Gastrocnemius medialis (tissue), 4 donors: ENCODE measurements at regions of chr9 and their contacts with region 1.

Region 1: GRCh38 chr9:2014696-2015580 is at the start of gene SMARCA2:
- DNase-seq: peak; percentile 96 to 97
- ATAC-seq: peak; percentile 77 to 81
- H3K4me3 ChIP-seq: peak within 1 kb of the TSS; percentile 79 to 96 (median 90)
- H3K27ac ChIP-seq: peak within 1 kb of the TSS; percentile 93 to 99 (median 96)
- H3K4me1 ChIP-seq: peaks cover 20% of the 10 kb centered on the region in 2 donors
- H3K27me3 ChIP-seq: no peaks in the 10 kb centered on the region
- CTCF ChIP-seq: no peak
- POLR2A ChIP-seq: peak; percentile 92 to 96
- total RNA-seq, gene SMARCA2: 54.6 to 69.7 (median 63.0) TPM

Region 2: DNA sequence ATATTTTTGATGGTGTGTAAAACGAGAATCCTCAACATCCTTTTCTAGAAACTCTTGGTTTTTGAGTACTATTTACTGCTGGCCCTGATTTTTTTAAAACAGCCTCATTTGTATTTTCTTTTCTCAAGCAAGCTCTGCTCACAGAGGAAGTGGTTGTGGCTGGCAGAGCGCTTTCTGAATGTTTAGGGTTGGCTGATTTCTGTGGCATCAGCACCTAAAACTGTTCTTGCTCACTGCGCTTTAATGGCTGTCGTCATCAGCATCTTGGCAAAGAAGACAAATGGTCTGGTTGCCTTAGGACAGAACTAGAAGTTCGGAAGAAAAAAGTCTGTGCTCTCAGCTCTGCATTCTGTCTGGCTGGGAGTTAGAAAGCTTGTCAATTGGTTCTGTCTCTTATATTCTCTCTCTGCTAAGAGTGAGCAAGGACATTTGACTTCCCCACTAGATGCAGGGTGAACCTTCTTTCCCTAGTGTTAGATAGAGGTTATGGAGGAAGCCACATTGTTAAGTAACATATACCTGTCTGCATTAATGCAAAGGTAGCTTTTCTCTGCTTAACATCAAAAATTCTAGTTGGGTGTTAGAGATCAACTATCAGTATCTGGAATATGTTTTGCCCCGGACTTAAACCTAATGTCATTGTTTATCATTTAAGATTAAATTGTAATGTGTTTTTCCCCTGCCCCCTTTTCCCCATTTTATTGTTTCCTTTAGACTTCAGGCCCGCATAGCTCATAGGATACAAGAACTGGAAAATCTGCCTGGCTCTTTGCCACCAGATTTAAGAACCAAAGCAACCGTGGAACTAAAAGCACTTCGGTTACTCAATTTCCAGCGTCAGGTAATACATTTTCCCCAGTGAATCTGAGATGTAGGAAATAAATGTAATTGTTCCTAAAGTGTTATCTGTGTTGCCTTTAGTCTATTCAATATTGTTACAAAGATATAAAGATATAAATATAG is 39.2 kb after region 1 on chr9:
- in situ Hi-C with region 1: no loop called
- intact Hi-C with region 1: no loop called
- DNase-seq: peak; percentile 4 to 18
- ATAC-seq: peak in 1 of 2 donors; percentile 24
- H3K4me3 ChIP-seq: no peak overlapping the region
- H3K27ac ChIP-seq: no peak overlapping the region
- H3K4me1 ChIP-seq: peaks cover 0 to 7% of the 10 kb centered on the region in 2 donors
- H3K27me3 ChIP-seq: no peaks in the 10 kb centered on the region
- CTCF ChIP-seq: no peak
- POLR2A ChIP-seq: no peak

Region 3: DNA sequence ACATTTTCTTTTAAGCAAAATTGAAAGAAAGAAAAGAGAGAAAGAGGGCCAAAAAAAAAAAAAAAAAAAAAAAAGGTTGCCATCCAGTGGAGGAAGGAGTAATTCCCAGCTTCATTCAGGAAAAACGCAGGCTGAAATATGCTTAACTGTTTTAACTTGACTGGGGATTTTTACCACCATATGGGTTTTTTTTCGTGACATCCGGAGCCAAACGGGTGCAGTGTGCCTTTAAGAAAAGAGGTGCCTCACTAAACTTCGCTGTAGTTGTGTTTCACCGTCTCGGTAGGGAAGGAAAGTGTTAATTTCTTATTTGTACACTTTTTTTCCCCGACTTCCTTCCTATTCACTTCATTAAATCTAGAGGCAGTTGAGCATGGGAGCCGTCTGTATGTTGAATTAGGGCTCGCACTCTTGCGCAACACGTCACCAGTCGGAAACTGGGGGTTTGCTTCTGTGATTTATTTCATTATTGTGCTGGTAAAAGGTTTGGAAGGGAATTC is 143.2 kb after region 1 on chr9:
- in situ Hi-C with region 1: no loop called
- intact Hi-C with region 1: loop called (anchors 5 kb)
- DNase-seq: peak; percentile 32 to 35
- ATAC-seq: peak; percentile 37 to 67
- H3K4me3 ChIP-seq: peak overlapping the region; percentile 54 to 70 (median 60)
- H3K27ac ChIP-seq: peak overlapping the region; percentile 78 to 90 (median 85)
- H3K4me1 ChIP-seq: peaks cover 18 to 23% of the 10 kb centered on the region in 2 donors
- H3K27me3 ChIP-seq: no peaks in the 10 kb centered on the region
- CTCF ChIP-seq: peak in 1 of 5 experiments; percentile 11
- POLR2A ChIP-seq: no peak

Region 4: DNA sequence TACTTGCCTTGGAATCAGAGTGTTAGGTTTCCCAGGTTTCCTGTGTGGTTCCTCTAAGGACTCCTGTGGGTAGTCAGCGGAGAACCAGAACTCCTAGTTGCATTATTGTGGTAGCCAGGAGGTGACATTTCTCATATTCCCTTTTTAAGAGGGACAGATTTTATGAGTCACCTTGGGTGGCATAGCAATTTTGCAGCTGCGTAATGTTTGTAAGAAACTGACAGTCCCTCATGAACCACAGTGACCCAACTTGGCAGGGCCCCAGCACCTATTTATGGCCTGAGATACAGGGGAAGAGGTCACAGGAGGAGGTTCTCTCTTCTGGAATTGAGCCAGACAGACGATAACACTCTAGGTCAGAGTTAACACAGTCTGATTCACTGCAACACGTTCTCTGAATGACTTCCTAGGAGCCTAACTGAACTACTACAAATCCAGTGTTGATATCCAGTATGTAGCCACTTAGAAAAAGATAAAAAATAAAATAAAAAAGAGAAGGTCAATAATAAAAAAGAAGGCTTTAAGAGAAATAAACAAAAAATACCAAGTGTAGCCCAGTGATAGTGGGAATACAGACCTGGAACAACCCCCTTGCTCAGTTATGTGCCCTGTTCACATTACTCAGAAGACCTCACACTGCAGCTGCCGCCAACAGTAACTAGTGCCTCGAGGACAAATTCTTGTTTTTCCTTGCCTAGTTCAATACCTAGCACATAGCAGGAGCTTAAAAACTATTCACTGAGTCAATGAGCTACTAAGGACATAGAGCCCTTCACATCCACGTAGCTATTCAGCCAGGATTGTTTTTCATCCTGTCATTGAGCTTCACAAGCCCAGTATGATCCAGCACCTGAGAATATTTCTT is 555.9 kb after region 1 on chr9:
- in situ Hi-C with region 1: no loop called
- intact Hi-C with region 1: loop called (anchors 5 kb)
- DNase-seq: peak; percentile 96 to 100
- ATAC-seq: peak; percentile 90 to 97
- H3K4me3 ChIP-seq: peak overlapping the region in 1 of 4 donors; percentile 5
- H3K27ac ChIP-seq: peak overlapping the region; percentile 81 to 84 (median 82)
- H3K4me1 ChIP-seq: peaks cover 17 to 39% of the 10 kb centered on the region in 2 donors
- H3K27me3 ChIP-seq: no peaks in the 10 kb centered on the region
- CTCF ChIP-seq: no peak
- POLR2A ChIP-seq: no peak

Region 5: GRCh38 chr9:2620919-2621679 is 606.2 kb after region 1 on chr9:
- in situ Hi-C with region 1: no loop called
- intact Hi-C with region 1: loop called (anchors 10 kb)
- DNase-seq: peak; percentile 71 to 85
- ATAC-seq: peak; percentile 56 to 59
- H3K4me3 ChIP-seq: peak overlapping the region; percentile 72 to 94 (median 90)
- H3K27ac ChIP-seq: peak overlapping the region; percentile 95 to 98 (median 97)
- H3K4me1 ChIP-seq: peaks cover 16 to 29% of the 10 kb centered on the region in 2 donors
- H3K27me3 ChIP-seq: no peaks in the 10 kb centered on the region
- CTCF ChIP-seq: peak in 4 of 5 experiments; percentile 21 to 40 (median 32)
- POLR2A ChIP-seq: peak; percentile 69 to 70

Region 6: DNA sequence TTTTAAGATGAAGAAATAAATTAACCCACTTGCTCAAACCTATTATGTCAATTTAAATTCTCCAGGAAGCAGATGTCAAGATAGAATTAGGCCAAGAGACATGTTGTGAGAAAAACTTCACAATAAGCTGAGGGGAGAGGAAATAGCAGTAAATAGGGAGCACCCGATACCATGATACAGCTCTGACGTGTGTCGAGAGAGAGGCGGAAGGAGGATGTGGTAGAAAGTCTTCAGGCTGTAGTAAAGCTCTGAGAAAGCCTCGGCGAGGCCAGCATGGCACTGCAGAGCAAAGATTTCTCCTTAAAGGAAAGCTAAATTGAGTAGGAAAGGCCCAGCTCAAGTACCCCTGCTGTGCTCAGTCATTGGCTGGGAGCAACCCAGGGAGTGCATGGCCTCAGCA is 835.0 kb after region 1 on chr9:
- in situ Hi-C with region 1: no loop called
- intact Hi-C with region 1: loop called (anchors 2 kb)
- DNase-seq: no peak
- ATAC-seq: no peak
- H3K4me3 ChIP-seq: no peak overlapping the region
- H3K27ac ChIP-seq: no peak overlapping the region
- H3K4me1 ChIP-seq: peaks cover 8 to 12% of the 10 kb centered on the region in 2 donors
- H3K27me3 ChIP-seq: no peaks in the 10 kb centered on the region
- CTCF ChIP-seq: no peak
- POLR2A ChIP-seq: no peak

Region 7: GRCh38 chr9:3525836-3526164 is 1510.9 kb after region 1 on chr9 and contains the start of gene RFX3:
- in situ Hi-C with region 1: no loop called
- intact Hi-C with region 1: loop called (anchors 1 kb)
- DNase-seq: peak; percentile 88 to 89
- ATAC-seq: peak; percentile 77 to 80
- H3K4me3 ChIP-seq: peak within 1 kb of the TSS; percentile 79 to 95 (median 85)
- H3K27ac ChIP-seq: peak within 1 kb of the TSS; percentile 97 to 100 (median 100)
- H3K4me1 ChIP-seq: peaks cover 28 to 47% of the 10 kb centered on the region in 2 donors
- H3K27me3 ChIP-seq: no peaks in the 10 kb centered on the region
- CTCF ChIP-seq: no peak
- POLR2A ChIP-seq: no peak
- total RNA-seq, gene RFX3: 2.1 to 11.5 (median 7.3) TPM